ENCODE measurements at regions of chr7 and their contacts with region 1.

Region 1: GRCh38 chr7:90595801-90596671 is at the start of gene CDK14:
- DNase-seq: peak; percentile 81 to 88
- H3K4me3 ChIP-seq: peak within 1 kb of the TSS; percentile 89
- H3K4me3 Mint-ChIP-seq: peak within 1 kb of the TSS; percentile 95
- H3K27ac Mint-ChIP-seq: peak within 1 kb of the TSS; percentile 75
- H3K4me1 ChIP-seq: 0 out of 2 replicates have a peak, but pooled peaks cover 2% of the 10 kb centered on the region
- H3K4me1 Mint-ChIP-seq: peaks cover 7% of the 10 kb centered on the region
- H3K27me3 ChIP-seq: no peaks in the 10 kb centered on the region
- H3K27me3 Mint-ChIP-seq: no peaks in the 10 kb centered on the region
- CTCF ChIP-seq: peak; percentile 9 to 51
- total RNA-seq, gene CDK14: 18.2 and 22.5 TPM in 2 replicates

Region 2: DNA sequence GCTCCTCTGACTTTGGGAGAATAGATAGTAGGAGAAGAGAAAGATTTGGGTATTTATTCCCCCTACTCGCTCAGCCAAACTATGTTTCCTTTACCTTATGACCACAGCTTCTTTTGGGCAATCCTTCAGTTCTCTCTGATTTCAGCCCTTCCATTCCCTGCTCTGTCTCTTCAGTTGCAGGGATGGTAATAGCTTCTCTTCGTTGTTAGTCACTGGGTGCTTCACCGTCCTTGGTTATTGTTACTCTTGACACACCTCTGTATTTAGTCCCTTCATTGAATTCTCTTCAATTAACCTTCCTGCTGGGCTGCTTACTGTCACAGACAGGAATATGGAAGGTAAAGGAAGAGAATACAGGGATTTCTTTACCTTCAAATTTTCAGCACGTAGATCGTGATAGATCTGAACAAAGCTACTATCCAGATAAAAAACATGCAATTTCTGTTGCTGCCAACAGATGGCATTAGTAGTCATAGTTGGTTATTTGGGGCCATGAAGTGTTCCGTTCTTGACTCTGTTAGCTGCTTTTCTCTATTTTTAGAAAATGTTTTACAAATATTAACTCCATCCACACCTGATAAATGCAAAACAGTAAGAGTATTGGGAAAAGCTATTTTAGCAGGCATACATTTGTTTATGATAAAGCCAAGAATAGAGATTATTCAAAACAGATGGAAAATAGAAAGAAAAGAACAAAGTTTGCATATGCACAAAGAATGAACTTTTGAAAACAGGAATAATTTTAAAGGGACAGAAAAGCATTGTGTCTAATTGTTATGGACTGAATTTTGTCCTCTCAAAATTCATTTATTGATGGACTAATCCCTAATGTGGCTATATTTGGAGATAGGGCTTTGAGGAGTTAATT is 140.6 kb before region 1 on chr7:
- CTCF ChIA-PET with region 1: interaction called, 3 read pairs
- POLR2A ChIA-PET with region 1: no interaction called
- intact Hi-C with region 1: loop called (anchors 10 kb)
- DNase-seq: peak in 1 of 2 experiments; percentile 42
- H3K4me3 ChIP-seq: no peak overlapping the region
- H3K4me3 Mint-ChIP-seq: peak overlapping the region; percentile 60
- H3K27ac Mint-ChIP-seq: no peak overlapping the region
- H3K4me1 ChIP-seq: 0 out of 2 replicates have a peak, but pooled peaks cover 4% of the 10 kb centered on the region
- H3K4me1 Mint-ChIP-seq: peaks cover 8% of the 10 kb centered on the region
- H3K27me3 ChIP-seq: no peaks in the 10 kb centered on the region
- H3K27me3 Mint-ChIP-seq: peaks cover 8% of the 10 kb centered on the region
- CTCF ChIP-seq: peak; percentile 40 to 75

Region 3: DNA sequence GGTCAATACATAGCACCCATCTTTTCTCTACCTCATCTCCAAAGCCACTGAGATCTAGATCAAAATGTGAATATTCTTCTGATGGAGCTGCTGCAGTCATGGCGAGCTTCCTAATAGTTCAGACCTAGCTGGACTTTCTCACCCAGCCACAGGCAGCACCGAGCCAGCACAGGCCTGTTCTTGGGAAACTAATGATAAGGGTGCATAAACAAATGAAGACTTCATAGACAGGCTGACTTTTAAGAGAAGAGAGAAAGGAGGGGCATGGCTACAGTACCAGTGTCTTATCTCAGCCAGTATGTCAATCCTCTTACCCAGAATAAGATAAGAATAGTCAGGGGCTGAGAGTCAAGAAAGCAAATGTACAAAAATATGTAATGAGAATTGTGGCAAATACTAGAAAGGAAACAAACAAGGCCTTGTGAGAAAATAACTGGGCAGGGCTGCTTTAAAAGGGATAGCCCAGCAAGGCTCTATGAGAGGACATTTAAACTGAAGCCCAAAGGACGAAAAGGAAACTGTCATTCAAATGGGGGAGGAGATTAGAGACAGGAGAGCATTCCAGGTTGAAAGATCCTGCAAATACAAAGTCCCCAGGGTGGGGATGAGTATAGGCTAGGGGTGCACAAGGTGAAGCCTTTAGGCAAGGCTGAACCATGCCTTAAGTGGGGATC is 21.8 kb before region 1 on chr7:
- CTCF ChIA-PET with region 1: no interaction called
- POLR2A ChIA-PET with region 1: no interaction called
- intact Hi-C with region 1: no loop called
- DNase-seq: peak; percentile 39 to 64
- H3K4me3 ChIP-seq: no peak overlapping the region
- H3K4me3 Mint-ChIP-seq: no peak overlapping the region
- H3K27ac Mint-ChIP-seq: no peak overlapping the region
- H3K4me1 ChIP-seq: peaks cover 31% of the 10 kb centered on the region
- H3K4me1 Mint-ChIP-seq: no peaks in the 10 kb centered on the region
- H3K27me3 ChIP-seq: no peaks in the 10 kb centered on the region
- H3K27me3 Mint-ChIP-seq: no peaks in the 10 kb centered on the region
- CTCF ChIP-seq: no peak

Region 4: DNA sequence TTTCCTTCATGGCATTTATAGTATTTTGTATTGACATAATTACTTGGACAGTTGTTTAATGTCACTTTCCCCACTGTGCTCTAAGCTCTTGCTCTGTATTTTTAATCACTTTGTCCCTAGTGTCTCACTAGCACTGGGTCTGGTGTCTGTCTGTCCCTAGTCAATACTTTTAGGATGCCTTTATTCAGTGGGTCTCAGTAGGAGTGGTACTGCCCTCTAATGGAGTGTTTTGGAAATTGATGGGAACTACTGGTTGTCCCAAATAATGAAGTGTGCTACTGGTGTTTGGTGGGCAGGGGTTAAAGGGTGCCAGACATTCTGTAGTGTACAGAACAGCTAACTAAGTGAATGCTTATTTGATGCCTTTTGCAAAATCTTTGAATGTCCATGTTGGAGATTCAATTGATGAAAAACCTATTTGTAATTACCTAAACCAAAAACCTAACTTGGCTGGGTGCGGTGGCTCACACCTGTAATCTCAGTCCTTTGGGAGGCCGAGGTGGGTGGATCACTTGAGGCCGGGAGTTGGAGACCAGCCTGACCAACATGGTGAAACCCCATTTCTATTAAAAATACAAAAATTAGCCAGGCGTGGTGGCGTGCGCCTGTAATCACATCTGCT is 33.4 kb after region 1 on chr7:
- CTCF ChIA-PET with region 1: interaction called, 3 read pairs
- POLR2A ChIA-PET with region 1: no interaction called
- intact Hi-C with region 1: loop called (anchors 1 kb)
- DNase-seq: peak in 1 of 2 experiments; percentile 65
- H3K4me3 ChIP-seq: no peak overlapping the region
- H3K4me3 Mint-ChIP-seq: no peak overlapping the region
- H3K27ac Mint-ChIP-seq: no peak overlapping the region
- H3K4me1 ChIP-seq: peaks cover 22% of the 10 kb centered on the region
- H3K4me1 Mint-ChIP-seq: peaks cover 17% of the 10 kb centered on the region
- H3K27me3 ChIP-seq: no peaks in the 10 kb centered on the region
- H3K27me3 Mint-ChIP-seq: no peaks in the 10 kb centered on the region
- CTCF ChIP-seq: peak; percentile 62 to 71

Region 5: GRCh38 chr7:90749262-90749661 is 153.2 kb after region 1 on chr7:
- CTCF ChIA-PET with region 1: no interaction called
- POLR2A ChIA-PET with region 1: no interaction called
- intact Hi-C with region 1: loop called (anchors 5 kb)
- DNase-seq: no peak
- H3K4me3 ChIP-seq: no peak overlapping the region
- H3K4me3 Mint-ChIP-seq: no peak overlapping the region
- H3K27ac Mint-ChIP-seq: no peak overlapping the region
- H3K4me1 ChIP-seq: no peaks in the 10 kb centered on the region
- H3K4me1 Mint-ChIP-seq: no peaks in the 10 kb centered on the region
- H3K27me3 ChIP-seq: no peaks in the 10 kb centered on the region
- H3K27me3 Mint-ChIP-seq: no peaks in the 10 kb centered on the region
- CTCF ChIP-seq: no peak

Region 6: GRCh38 chr7:91034459-91035368 is 438.7 kb after region 1 on chr7:
- CTCF ChIA-PET with region 1: no interaction called
- POLR2A ChIA-PET with region 1: no interaction called
- intact Hi-C with region 1: loop called (anchors 2 kb)
- DNase-seq: peak in 1 of 2 experiments; percentile 64
- H3K4me3 ChIP-seq: no peak overlapping the region
- H3K4me3 Mint-ChIP-seq: no peak overlapping the region
- H3K27ac Mint-ChIP-seq: no peak overlapping the region
- H3K4me1 ChIP-seq: no peaks in the 10 kb centered on the region
- H3K4me1 Mint-ChIP-seq: peaks cover 9% of the 10 kb centered on the region
- H3K27me3 ChIP-seq: no peaks in the 10 kb centered on the region
- H3K27me3 Mint-ChIP-seq: no peaks in the 10 kb centered on the region
- CTCF ChIP-seq: peak; percentile 69 to 72